Naive thymus-derived CD4-positive, alpha-beta T cell (primary cell): ENCODE measurements at regions of chr20 and their contacts with region 1.

Region 1: DNA sequence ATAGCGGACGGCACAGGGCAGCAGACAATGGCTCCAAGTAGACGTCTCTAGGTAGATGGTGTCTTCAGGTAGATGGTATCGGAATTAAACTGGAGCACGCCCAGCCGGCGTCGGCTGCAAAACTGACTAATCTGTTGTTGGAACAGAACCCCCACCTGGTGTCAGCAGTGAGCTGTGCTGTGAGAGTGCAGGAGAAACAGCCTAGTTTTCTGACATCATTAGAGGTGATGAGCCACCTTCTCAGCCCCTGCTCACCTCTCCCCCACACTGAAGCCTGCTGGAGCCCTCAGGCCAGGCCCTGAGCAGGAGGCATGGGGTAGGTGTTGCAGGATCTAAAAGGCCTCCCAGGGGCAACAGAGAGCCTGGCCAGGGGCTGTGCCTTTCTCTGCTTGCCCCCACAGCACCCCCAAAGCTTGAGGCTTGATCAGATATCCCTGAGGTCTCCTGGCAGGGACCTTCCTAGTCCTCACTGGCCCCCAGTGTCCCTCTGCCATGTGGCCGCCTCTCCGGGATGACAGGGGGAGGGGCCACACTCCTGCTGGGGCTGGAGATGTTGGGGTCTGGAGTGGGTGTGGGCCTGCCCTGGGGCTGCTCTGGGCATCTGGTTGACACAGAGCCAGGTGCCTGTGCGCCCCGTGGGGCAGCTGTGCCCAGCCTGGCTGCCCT is 6.9 kb upstream of the HELZ2 start:
- DNase-seq: peak; percentile 30 to 87 (median 81)
- ATAC-seq: peak; percentile 96
- H3K4me3 ChIP-seq: no peak overlapping the region
- H3K4me3 Mint-ChIP-seq: peak overlapping the region in 1 of 10 donors; percentile 17
- H3K27ac ChIP-seq: no peak overlapping the region
- H3K27ac Mint-ChIP-seq: peak overlapping the region in 1 of 9 donors; percentile 74
- H3K4me1 ChIP-seq: peaks cover 0 to 10% of the 10 kb centered on the region in 2 donors
- H3K4me1 Mint-ChIP-seq: peaks cover 0 to 17% (median 14%) of the 10 kb centered on the region in 7 donors
- H3K27me3 ChIP-seq: no peaks in the 10 kb centered on the region
- H3K27me3 Mint-ChIP-seq: peaks cover 0 to 42% (median 0%) of the 10 kb centered on the region in 5 donors

Region 2: GRCh38 chr20:63791497-63792156 is 210.7 kb after region 1 on chr20:
- CTCF ChIA-PET with region 1: no interaction called
- POLR2A ChIA-PET with region 1: no interaction called
- intact Hi-C with region 1: loop called in 1 of 2 experiments (anchors 1 kb)
- DNase-seq: no peak
- ATAC-seq: no peak
- H3K4me3 ChIP-seq: no peak overlapping the region
- H3K4me3 Mint-ChIP-seq: no peak overlapping the region
- H3K27ac ChIP-seq: no peak overlapping the region
- H3K27ac Mint-ChIP-seq: no peak overlapping the region
- H3K4me1 ChIP-seq: no peaks in the 10 kb centered on the region
- H3K4me1 Mint-ChIP-seq: peaks cover 0 to 7% (median 2%) of the 10 kb centered on the region in 7 donors
- H3K27me3 ChIP-seq: no peaks in the 10 kb centered on the region
- H3K27me3 Mint-ChIP-seq: peaks cover 0 to 18% (median 0%) of the 10 kb centered on the region in 5 donors

Region 3: DNA sequence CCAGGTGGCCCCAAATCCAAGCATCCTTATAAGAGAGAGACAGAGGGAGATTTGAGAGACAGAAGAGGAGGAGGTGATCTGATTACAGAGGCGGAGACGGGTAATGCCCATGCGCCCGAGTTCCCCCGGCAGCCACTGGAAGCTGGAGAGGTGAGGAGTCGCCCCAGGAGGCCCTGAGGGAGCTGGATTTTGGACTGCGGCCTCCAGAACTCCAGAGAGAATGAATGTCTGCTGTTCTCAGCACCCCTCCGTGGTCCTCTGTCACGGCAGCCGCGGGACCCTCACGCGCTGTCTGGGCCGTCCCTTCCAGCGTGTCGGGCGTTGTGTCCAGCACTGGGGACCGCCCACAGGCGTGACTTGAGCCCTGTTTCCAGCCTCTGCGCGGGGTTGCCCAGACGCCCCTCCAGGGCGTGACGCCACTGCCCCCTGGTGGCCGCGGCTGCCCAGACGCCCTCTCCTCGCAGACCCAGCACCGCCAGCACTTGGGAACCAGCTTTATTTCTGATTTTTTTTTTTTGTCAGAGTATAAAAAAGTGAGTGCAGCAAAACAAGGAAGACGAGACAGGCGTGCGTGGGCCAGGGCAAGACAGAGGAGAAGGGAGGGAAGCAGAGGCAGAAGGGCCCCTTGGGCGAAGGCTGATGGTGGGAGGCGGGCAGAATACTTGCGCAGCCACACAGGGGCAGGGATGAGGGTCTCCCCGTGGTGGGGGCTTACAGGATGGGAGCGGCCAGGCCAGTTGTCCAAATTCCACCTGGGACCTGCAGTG is 392.9 kb after region 1 on chr20:
- CTCF ChIA-PET with region 1: interaction called, 3 read pairs
- POLR2A ChIA-PET with region 1: no interaction called
- intact Hi-C with region 1: loop called in 1 of 2 experiments (anchors 2 kb)
- DNase-seq: peak; percentile 59 to 89 (median 78)
- ATAC-seq: peak; percentile 81
- H3K4me3 ChIP-seq: no peak overlapping the region
- H3K4me3 Mint-ChIP-seq: peak overlapping the region in 5 of 10 donors; percentile 7 to 71 (median 36)
- H3K27ac ChIP-seq: peak overlapping the region; percentile 35
- H3K27ac Mint-ChIP-seq: peak overlapping the region; percentile 16 to 88 (median 71)
- H3K4me1 ChIP-seq: peaks cover 16 to 36% of the 10 kb centered on the region in 2 donors
- H3K4me1 Mint-ChIP-seq: peaks cover 34 to 63% (median 54%) of the 10 kb centered on the region in 7 donors
- H3K27me3 ChIP-seq: no peaks in the 10 kb centered on the region
- H3K27me3 Mint-ChIP-seq: peaks cover 0 to 2% (median 0%) of the 10 kb centered on the region in 5 donors